ENCODE measurements at regions of chr1 and their contacts with region 1.

Region 1: DNA sequence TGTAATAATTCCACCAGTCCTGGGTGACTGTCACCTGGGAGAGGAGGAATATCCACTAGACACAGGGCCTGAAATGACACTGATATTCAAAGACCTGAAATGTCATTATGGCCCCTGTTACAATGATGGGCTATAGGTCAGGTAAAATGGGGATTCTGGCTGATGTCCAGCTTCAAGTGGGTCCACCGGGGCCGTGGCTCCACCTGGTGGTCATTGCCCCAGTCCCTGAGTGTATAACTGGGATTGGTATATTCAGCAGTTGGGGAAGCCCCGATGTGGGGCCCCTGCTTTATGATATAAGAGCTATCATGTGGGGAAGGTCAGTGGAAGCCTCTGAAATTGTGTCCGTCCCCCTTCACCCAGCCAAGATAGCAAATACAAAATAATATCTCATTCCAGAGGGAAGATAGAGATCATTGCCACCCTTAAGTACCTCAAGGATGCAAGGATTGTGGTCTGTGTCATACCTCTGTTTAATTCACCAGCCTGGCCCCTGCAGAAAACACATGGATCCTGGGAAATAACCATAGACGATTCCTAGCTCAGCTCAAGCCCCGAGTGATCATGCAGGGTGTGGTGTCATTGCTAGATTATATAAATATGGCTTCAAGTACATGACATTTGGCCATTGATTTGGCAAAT is 19.4 kb downstream of the PLEKHO1 start:
- DNase-seq: peak; percentile 74
- CTCF ChIP-seq: peak; percentile 90

Region 2: DNA sequence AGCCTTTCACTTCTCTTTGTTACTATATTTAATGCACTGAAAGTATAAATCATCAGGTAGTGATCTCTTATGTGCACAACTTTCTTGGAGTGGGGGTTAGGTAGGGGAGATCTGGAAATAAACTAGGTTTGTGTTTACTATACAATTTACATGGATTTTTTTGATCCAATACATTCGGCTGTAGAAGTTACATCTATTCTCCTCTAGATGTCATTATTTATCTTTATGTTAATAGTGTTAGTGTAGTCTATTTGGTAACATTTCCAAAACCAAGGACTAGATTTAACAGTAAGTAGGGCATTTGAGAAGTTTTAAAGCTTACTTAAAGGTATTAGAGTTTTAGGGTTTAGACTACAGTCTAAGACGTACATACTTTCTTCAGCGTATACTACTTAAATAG is 96.1 kb before region 1 on chr1:
- in situ Hi-C with region 1: loop called (anchors 5 kb)
- DNase-seq: peak; percentile 31
- CTCF ChIP-seq: peak; percentile 47

Region 3: DNA sequence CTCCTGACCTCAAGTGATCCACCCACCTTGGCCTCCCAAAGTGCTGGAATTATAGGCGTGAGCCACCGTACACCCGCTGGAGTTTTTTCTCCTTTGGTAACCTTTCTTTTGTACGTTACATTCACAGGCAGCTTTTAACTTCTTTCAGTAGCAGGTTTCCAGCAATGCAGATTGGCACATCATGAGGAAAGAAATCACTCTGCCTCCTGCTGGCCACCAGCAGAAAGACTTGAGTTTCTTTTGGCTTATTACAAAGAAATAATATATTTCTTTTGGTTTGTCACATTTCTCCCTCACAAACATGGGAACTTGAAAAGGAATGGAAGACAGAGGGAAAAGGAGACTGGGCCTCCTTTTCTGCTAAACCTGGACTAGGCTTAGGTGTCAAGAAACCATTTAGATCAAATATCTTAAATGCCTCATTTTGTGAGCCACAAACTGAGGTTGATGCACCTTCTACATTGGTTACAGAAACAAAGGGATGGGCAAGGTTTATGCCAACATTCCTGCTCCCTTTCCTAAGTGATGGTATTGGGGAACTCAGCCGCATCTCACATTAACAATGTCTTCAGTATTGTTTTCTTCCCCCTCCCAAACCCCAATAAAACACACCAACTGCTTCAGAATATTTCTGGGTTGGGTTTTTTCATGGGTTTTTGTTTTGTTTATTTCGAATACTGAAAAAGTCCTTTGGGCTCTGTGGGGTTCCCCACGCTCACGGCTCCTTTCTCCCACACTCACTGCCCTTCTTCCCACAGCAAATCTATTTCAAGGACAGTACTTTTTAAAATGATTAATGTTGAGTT is 452.6 kb after region 1 on chr1:
- in situ Hi-C with region 1: no loop called
- DNase-seq: peak; percentile 57
- CTCF ChIP-seq: peak; percentile 69